Activated T-helper 1 cell treated with anti-CD3 and anti-CD28 coated beads, Interleukin-12 subunit alpha, Interleukin-12 subunit beta, Interleukin-2, Interleukin-4 antibody, amounts not matched to agents 30 ng/mL and 10 ng/mL and 1 ng/mL, durations not matched to agents 14 hours and 24 hours and 36 hours (primary cell): ENCODE measurements at regions of chr19 and their contacts with region 1.

Region 1: GRCh38 chr19:53520550-53521372 is 17.2 kb upstream of the ZNF331 start:
- DNase-seq: peak; percentile 81
- H3K4me3 Mint-ChIP-seq: peak overlapping the region; percentile 98
- H3K27ac Mint-ChIP-seq: peak overlapping the region; percentile 84
- H3K4me1 Mint-ChIP-seq: peaks cover 18% of the 10 kb centered on the region
- H3K27me3 Mint-ChIP-seq: no peaks in the 10 kb centered on the region

Region 2: DNA sequence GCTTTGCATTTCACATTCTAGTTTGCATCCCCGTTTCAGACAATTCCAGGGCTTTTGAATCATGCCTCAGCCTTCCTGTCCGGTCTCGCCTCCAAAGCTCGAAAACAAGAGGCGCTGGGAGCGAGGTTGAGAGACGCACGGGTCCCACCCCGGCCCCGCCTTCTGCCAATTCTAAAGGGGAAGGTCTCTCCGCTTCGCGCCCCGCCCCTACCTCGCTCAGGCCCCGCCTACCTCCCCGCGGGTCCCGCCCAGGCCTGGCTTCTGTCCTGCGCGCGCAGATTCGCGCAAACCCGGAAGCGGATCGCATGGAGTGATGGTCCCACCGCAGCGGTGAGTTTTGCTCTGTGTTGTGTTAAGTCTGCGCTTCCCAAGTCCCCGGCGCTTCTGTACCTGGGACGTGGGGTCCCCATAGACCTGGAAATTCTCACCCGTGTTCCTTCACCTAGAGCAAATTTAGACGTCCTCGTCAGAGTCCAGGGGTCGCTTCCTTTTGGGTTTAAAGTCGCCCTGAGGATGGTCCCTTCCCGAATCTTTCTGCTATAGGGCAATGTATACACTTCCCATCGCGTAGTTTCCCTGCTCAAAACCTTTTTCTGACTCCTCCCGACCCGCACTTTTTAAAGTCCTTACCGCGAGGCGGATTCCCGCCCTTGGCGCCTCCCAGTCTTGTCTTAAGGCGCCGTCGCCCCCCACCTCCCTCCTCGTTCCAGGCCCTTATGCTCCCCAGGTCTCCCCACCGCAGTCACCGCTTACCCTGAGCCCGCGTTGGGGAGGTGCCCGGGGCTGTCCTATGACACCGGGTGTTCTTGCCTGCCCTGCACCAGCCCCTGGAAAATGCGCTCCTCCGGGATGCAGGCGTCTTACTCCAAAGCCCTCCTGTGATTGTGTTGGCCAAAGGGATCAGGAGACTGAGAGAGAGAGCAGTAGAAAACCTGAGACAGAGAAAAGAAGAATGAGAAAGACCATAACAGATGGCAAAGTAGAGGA is 187.0 kb before region 1 on chr19 and contains the start of gene ZNF845:
- intact Hi-C with region 1: loop called (anchors 1 kb)
- DNase-seq: peak; percentile 95
- H3K4me3 Mint-ChIP-seq: peak within 1 kb of the TSS; percentile 91
- H3K27ac Mint-ChIP-seq: peak within 1 kb of the TSS; percentile 80
- H3K4me1 Mint-ChIP-seq: peaks cover 10% of the 10 kb centered on the region
- H3K27me3 Mint-ChIP-seq: no peaks in the 10 kb centered on the region
- total RNA-seq, gene ZNF845: 6.5 and 6.7 TPM in 2 replicates

Region 3: DNA sequence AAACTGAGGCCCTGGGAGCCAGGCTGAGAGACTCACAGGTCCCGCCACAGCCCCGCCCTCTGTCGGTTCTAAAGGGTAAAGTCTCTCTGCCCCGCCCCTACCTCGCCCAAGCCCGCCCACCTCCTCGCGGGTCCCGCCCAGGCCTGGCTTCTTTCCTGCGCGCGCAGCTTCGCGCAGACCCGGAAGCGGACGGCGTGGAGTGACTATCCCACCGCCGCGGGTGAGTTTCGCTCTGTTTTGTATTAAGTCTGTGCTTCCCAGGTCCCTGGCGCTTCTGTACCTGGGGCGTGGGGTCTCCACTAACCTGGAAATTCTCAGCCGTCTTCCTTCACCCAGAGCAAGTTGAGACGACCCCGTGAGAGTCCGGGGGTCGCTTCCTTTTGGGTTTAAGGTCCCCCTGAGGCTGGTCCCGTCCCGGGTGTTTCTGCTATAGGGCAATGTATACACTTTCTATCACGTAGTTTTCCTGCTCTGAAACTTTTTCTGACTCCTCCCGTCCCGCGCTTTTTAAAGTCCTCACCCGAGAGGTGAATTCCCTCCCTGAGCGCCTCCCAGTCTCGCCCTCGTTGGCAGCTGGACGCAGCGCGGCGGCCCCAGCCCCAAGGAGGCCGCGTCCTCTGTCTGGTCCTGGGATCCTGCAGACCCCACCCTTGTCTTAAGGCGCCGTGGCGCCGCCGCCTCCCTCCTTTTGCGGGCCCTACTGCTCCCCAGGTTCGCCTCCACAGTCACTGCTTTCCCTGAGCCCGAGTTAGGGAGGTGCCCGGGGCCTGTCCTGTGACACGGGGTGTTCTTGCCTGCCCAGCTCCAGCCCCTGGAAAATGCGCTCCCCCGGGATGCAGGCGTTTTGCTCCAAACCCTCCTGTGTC is 125.6 kb before region 1 on chr19 and contains the start of gene ZNF765:
- intact Hi-C with region 1: loop called (anchors 1 kb)
- DNase-seq: peak; percentile 93
- H3K4me3 Mint-ChIP-seq: peak within 1 kb of the TSS; percentile 98
- H3K27ac Mint-ChIP-seq: peak within 1 kb of the TSS; percentile 85
- H3K4me1 Mint-ChIP-seq: peaks cover 27% of the 10 kb centered on the region
- H3K27me3 Mint-ChIP-seq: no peaks in the 10 kb centered on the region
- total RNA-seq, gene ZNF765: 9.2 and 10.8 TPM in 2 replicates

Region 4: DNA sequence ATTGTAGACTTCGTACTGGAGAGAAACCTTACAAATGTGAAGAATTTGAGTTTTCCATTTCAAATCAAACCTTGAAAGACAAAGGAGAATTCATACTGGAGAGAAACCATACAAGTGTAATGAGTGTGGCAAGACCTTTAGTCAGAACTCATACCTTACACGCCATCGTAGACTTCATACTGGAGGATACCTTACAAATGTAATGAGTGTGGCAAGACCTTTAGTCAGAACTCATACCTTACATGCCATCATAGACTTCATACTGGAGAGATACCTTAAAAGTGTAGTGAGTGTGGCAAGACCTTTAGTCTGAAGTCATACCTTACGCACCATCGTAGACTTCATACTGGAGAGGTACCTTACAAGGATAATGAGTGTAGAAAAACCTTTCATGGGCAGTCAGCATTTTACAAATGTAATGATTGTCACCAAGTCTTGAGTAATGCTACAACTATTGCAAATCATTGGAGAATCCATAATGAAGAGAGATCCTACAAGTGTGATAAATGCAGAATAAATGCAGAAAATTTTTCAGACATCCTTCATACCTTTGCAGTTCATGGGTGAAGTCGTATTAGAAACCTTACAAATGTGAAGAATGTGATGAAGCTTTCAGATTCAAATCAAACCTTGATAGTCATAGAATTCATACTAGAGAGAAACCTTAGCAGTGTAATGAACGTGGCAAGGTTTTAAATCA is 111.1 kb before region 1 on chr19:
- intact Hi-C with region 1: no loop called
- DNase-seq: no peak
- H3K4me3 Mint-ChIP-seq: no peak overlapping the region
- H3K27ac Mint-ChIP-seq: no peak overlapping the region
- H3K4me1 Mint-ChIP-seq: no peaks in the 10 kb centered on the region
- H3K27me3 Mint-ChIP-seq: no peaks in the 10 kb centered on the region

Region 5: GRCh38 chr19:53467485-53468262 is 53.1 kb before region 1 on chr19 and contains the start of gene ZNF813:
- intact Hi-C with region 1: loop called (anchors 1 kb)
- DNase-seq: peak; percentile 89
- H3K4me3 Mint-ChIP-seq: peak within 1 kb of the TSS; percentile 89
- H3K27ac Mint-ChIP-seq: peak within 1 kb of the TSS; percentile 68
- H3K4me1 Mint-ChIP-seq: peaks cover 13% of the 10 kb centered on the region
- H3K27me3 Mint-ChIP-seq: peaks cover 4% of the 10 kb centered on the region
- total RNA-seq, gene ZNF813: 3.7 and 4.3 TPM in 2 replicates

Region 6: DNA sequence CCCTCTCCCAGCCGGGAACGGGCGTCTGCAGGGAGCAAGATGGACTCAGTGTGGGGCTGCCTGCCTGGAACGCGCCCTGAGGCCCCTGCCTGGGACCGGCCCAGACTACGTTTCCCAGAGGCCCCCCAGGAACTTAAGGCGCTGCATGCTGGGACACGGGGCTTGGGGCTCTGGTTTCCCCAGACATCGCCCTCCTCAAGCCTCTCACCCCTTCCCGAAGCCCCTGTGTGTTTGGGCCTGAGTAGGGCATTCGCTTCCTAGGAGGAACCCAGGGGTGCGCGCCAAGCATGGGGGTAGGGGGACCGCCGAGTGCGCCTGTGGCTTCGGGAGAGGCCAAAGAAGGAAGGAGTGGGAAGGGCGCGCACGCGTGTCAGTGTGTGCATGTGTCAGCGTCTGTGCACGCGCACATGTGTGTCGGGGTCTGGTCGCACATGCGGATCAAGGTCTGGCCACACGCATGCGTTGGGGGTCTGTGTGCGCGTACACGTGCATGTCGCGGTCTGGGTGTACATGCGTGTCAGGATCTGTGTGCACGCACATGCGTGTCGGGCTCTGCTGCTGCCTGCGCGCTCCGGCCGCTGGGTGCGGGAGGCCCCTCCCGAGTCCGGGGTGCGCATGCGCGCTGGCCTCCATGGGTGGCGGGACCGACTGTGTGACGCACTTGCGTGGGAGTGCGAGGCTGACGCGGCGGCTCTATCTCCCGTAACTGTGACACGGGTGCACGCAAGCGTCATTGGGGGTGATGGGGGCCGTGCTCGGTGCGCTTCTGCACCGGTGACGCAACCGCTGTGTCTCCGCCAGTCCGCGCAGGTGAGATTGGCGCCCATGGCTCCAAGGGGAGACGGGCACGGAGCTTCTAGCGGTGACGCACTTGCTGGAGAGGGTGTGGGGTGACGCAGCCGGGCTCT is 33.4 kb after region 1 on chr19:
- intact Hi-C with region 1: loop called (anchors 1 kb)
- DNase-seq: peak; percentile 88
- H3K4me3 Mint-ChIP-seq: peak overlapping the region; percentile 90
- H3K27ac Mint-ChIP-seq: peak overlapping the region; percentile 95
- H3K4me1 Mint-ChIP-seq: peaks cover 23% of the 10 kb centered on the region
- H3K27me3 Mint-ChIP-seq: no peaks in the 10 kb centered on the region